ENCODE measurements at regions of chr16 and their contacts with region 1.

Region 1: GRCh38 chr16:73713778-73714495 is 582.7 kb upstream of the PSMD7 start:
- DNase-seq: peak in 7 of 10 donors; percentile 34 to 70 (median 52)
- H3K4me3 ChIP-seq: peak overlapping the region in 58 of 59 donors; percentile 12 to 68 (median 42)
- H3K27ac ChIP-seq: peak overlapping the region in 45 of 59 donors; percentile 1 to 89 (median 69)
- H3K27me3 ChIP-seq: no peaks in the 10 kb centered on the region
- CTCF ChIP-seq: peak; percentile 46 to 79 (median 67)

Region 2: DNA sequence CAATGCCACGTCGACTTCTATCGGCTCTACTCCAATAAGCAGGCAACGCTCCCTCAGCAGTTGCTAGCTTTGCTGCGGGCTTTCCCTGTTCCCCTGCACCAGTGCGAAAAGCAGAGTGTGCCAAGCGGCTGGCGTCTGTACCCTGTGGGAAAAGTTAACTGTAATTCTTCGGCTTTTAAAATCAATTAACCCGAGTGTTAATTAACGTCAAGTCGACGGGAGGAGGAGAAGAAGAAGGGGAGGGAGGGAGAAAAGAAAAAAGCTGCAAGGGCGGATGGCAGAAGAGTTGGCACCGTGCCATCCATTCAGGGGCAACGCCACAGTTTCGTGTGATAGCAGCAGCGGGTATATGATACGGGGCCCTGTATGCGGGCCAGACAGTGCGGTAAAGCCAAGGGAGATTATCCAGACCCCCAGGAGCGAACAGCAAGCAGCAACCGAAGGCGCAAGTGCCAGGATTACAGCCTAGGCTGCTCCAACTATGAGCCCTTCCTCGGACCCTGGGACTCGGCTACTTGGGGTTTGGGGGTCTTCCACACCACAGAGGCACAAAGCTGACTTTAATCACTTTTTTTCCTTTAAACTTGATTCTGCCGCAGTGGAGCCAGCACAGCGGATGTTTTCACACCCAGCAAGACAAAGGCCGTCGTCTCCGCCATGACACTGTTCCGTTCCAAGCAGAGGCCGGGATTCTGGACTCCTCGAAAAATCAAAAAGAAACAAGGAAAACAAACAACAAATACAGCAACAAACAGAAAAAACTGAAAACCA is 1288.2 kb before region 1 on chr16:
- intact Hi-C with region 1: loop called in 1 of 2 experiments (anchors 5 kb)
- DNase-seq: peak; percentile 40 to 73 (median 62)
- H3K4me3 ChIP-seq: peak overlapping the region; percentile 25 to 76 (median 61)
- H3K27ac ChIP-seq: peak overlapping the region; percentile 70 to 99 (median 98)
- H3K27me3 ChIP-seq: peaks cover 0 to 5% (median 0%) of the 10 kb centered on the region in 45 donors
- CTCF ChIP-seq: peak in 5 of 56 donors; percentile 2 to 20 (median 14)

Region 3: DNA sequence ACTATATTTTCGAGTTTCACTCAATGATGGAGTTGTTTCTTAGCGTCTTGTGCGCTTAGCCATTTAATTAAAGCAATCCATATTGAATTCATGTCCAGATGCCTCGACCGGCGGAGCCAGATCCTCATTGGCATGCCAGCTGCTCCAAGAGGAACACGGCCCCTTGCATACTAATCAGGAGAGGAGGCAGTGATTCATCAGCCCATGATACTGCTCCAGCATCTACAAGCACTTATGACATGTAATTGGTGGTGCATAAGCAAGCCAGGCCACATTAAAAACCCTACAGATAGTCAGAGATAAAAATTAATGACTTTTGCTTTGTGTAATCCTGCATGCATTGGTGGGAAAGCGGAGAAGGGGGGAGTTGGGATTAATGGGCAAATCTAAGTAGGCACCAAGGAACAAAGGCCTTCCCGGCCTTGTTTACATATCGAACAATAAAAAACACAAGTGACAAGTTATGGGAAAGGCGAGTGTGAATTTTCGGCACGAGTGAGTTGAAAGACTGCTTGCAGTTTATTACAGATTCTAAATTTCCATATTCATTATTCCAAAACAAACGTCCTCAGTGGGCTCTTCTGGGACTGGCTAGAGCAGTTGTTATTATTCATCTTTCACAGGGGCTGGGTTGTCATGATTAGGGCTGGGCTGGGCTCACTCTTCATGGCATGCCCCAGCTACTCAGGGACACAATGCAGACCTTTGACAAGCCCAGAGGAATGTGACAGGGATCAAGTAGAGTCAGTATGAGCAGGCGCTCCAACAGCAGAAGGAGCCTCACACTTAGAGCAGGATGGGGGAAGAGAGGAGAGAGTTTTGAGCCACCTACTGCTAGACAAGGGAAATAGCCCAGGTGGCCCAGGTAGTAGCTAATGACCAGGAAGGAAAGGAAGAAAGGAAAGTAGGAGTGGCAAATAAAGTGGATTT is 384.3 kb before region 1 on chr16:
- intact Hi-C with region 1: loop called in 1 of 2 experiments (anchors 10 kb)
- DNase-seq: peak in 9 of 10 donors; percentile 37 to 89 (median 77)
- H3K4me3 ChIP-seq: peak overlapping the region in 43 of 59 donors; percentile 0 to 53 (median 25)
- H3K27ac ChIP-seq: peak overlapping the region in 56 of 59 donors; percentile 9 to 91 (median 76)
- H3K27me3 ChIP-seq: peaks cover 0 to 4% (median 0%) of the 10 kb centered on the region in 45 donors
- CTCF ChIP-seq: peak in 4 of 56 donors; percentile 4 to 15 (median 12)

Region 4: GRCh38 chr16:73432850-73433730 is 280.8 kb before region 1 on chr16:
- intact Hi-C with region 1: no loop called
- DNase-seq: peak in 1 of 10 donors; percentile 14
- H3K4me3 ChIP-seq: no peak overlapping the region
- H3K27ac ChIP-seq: no peak overlapping the region
- H3K27me3 ChIP-seq: peaks cover 0 to 8% (median 0%) of the 10 kb centered on the region in 45 donors
- CTCF ChIP-seq: no peak

Region 5: GRCh38 chr16:73565262-73565661 is 148.7 kb before region 1 on chr16:
- intact Hi-C with region 1: loop called in 1 of 2 experiments (anchors 5 kb)
- DNase-seq: no peak
- H3K4me3 ChIP-seq: no peak overlapping the region
- H3K27ac ChIP-seq: no peak overlapping the region
- H3K27me3 ChIP-seq: peaks cover 0 to 46% (median 10%) of the 10 kb centered on the region in 45 donors
- CTCF ChIP-seq: peak in 49 of 56 donors; percentile 22 to 72 (median 47)

Region 6: GRCh38 chr16:73846356-73846755 is 132.4 kb after region 1 on chr16:
- intact Hi-C with region 1: loop called in 1 of 2 experiments (anchors 2 kb)
- DNase-seq: peak in 5 of 10 donors; percentile 4 to 58 (median 48)
- H3K4me3 ChIP-seq: no peak overlapping the region
- H3K27ac ChIP-seq: peak overlapping the region in 3 of 59 donors; percentile 3 to 37 (median 19)
- H3K27me3 ChIP-seq: no peaks in the 10 kb centered on the region
- CTCF ChIP-seq: peak in 45 of 56 donors; percentile 8 to 61 (median 40)

Region 7: DNA sequence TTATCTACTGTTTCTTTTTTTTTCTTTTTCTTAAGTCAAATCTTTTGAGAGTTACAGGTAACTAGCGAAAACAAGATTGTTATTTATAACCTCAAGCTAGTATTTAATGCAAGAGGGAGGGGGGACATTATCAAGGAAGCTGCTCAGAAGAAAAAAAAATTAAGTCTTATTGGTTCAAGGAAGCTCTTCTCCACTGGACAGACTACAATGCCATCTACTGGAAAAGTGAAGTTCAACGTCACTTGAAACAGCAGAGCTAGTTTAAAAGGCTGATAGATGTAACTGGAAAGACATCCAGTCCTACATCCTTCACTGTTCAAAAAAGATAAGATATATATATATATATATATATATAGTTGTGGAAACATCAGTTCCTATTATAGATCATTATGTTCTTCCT is 164.7 kb after region 1 on chr16:
- intact Hi-C with region 1: loop called in 1 of 2 experiments (anchors 5 kb)
- DNase-seq: no peak
- H3K4me3 ChIP-seq: no peak overlapping the region
- H3K27ac ChIP-seq: no peak overlapping the region
- H3K27me3 ChIP-seq: peaks cover 0 to 21% (median 0%) of the 10 kb centered on the region in 45 donors
- CTCF ChIP-seq: peak in 55 of 56 donors; percentile 39 to 86 (median 68)

Measured in dorsolateral prefrontal cortex (tissue), 120 donors.